GM18951 (cell line): ENCODE measurements at regions of chr4 and their contacts with region 1.

Region 1: DNA sequence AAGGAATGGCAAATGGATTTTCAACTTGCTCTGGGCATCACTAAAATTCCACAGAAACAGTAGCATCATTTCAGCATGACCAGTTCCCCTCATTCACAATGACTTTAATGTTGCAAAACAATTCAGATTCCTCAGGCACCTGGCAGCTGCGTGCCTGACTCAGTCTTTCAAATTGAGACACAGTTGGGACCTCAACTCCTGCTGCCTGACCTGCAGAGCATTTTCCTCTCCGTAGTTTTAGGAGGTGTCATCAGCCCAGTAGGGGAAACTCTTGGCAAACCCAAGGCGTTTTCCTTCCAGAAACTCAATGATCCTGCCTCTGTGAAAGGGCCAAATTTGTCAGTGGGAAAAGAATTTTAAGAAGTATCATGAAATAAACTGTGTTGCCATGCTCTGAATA is 388.9 kb downstream of the SPRY1 start:
- POLR2A ChIP-seq: no peak

Region 2: DNA sequence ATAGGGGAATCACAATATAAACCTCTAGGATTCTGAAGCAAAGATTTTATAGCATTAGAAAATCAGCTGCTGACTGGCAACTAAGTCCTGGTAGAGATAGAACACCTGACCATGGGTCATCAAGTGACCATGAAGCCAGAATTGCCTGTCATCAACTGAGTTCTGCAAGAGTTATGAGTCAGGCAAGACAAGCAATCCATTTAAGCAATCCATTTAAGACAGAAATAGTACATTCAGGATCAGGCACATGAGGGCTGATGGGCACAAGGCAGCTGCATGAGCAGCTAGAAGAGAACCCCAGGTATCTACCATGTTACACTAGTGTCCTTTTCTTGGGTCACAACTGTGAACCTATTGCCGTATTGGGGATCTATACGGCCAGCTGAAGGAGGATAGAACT is 290.0 kb before region 1 on chr4:
- in situ Hi-C with region 1: no loop called
- POLR2A ChIP-seq: no peak

Region 3: DNA sequence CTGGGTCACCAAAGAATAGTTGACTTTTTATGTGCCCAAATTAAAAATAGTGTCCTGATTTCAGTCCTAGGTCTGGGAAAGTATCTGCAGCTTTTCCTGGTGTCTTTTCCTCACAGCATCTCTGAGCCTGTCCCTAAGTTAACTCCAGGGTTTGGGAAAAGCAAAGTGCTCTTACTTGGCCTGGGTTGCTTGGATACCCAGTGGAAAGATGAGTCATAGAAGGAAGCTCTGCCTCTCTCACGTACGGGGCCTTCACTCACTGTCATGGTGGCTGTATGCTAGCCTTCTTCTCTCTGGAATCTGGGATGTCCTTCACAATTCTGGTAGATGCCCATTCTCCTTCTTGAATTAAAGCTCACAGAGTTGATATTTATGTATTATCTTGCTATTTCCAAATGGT is 319.7 kb after region 1 on chr4:
- in situ Hi-C with region 1: no loop called
- POLR2A ChIP-seq: no peak

Region 4: DNA sequence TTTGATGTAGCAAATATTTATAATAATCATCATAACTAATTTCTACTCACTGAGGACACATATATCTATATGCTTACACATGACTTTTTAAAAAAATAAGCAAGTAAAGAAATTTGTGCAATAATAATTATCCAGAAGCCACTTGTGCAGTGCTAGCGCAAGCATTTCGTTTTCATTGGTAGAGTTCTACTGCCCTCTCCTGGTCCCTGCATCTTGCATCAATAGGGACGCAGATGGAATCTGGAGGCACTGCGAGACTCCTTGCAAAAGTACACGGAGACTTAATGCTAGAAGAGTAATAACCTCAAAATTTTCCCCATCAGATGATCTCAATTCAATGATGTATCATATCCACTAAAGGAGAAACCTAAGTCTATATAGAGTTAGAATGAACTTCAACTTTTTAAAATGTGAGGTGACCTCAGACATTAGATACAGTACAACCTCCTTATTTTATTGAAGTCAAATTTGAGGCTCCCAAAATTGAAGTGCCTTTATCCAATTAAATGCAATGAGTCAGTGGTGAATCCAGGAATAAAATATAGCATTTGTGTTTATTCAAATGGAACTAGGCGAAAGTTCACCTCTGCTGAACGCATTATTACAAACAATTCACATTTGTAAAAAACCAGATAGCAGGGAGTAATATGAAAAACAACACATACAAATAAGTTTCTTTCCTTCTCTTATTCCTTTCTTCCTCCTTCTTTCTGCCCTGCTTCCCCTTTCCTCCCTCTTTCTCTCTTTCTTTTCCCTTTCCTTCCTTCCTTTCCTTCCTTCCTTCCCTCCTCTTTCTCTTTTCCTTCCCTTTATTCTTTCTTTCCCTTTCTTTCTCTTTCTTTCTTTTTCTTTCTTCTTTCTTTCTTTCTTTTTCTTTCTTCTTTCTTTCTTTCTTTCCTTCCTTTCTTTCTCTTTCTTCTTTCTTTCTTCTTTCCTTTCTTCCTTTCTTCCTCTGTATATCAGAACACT is 477.0 kb after region 1 on chr4:
- in situ Hi-C with region 1: loop called (anchors 25 kb)
- POLR2A ChIP-seq: no peak